ENCODE measurements at regions of chr11 and their contacts with region 1.

Region 1: DNA sequence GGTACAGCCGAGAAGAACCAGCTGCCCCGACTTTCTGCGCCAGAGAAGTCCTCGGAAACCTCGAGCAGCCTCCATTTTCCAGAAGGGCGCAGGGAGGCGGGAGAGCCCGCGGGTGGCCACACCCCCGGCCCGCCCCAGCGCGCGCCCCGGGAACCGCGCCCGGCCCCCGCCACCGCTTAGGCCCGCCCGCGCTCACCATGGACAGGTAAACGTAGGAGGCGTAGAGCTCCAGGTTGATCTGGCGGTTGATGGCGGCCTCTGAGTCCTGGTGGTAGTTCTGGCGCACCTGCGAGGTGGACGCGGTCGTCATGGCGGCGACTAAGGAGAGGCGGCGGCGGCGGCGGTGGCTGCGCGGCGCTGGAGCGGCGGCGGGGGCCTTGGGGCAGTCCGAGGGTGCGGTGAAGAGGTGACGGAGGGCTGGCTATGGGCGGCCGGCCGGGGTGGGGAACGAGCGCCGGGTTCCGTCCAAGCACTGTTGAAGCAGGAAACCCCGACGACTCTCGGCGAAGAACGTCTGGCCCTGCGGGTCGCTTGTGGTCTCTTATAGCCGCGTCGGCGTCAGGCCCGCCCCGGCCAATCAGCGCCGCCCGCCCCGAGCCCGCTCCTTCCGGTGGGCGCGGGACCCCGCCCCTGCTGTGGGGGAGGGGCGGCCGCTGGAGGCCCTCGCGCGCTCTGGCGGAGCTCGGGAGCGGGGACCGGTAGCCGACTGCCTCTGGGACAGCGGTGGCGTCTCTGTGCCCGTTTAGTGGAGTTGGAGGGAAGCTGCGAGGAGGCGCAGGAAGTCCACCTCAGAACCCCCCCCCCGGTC is at the start of gene FTH1:
- DNase-seq: peak; percentile 96 to 97
- ATAC-seq: peak; percentile 90
- H3K4me3 ChIP-seq: peak within 1 kb of the TSS; percentile 87 to 96
- H3K27ac ChIP-seq: peak within 1 kb of the TSS; percentile 63 to 96
- H3K4me1 ChIP-seq: no peaks in the 10 kb centered on the region
- H3K27me3 ChIP-seq: no peaks in the 10 kb centered on the region
- total RNA-seq, gene FTH1: 2,602 to 2,677 TPM

Region 2: DNA sequence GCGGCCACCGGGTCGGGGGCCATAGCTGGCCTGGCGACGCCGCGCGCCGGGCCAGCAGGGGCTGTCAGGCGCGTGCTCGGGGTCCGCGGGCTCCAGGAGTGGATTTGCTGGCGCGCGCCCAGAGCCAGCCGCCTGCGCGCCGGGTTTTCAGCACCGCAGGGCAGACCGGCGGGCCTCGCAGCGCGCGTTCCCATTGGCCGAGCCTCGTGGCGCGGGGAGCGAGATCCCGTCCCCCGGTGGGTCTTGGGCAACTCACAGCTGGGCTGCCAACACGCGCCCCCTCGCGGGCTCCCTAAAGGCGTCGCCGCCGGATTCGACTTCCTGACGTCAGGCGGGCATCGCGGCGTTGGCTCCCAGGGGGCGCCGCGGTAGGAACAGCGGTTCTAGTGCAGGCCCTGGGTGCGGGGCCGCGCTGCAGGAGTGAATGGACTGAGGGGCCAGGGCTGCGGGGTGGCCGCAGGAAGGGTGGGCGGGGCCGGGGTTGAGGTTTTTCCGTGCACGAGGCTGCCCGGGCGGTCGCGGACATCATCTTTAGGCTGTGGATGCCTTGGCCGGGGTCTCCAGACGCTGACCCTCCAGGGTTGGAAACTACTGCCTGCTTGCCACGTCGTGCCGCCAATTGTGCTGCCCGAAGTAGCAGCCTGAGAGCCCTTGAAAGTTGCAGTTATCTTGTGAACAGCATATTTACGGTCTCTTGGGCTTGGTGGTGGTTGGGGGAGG is 150.4 kb before region 1 on chr11 and contains the start of gene FADS1:
- intact Hi-C with region 1: loop called (anchors 5 to 10 kb)
- DNase-seq: peak; percentile 97 to 98
- ATAC-seq: peak; percentile 78
- H3K4me3 ChIP-seq: peak within 1 kb of the TSS; percentile 48 to 60
- H3K27ac ChIP-seq: peak within 1 kb of the TSS; percentile 84 to 92
- H3K4me1 ChIP-seq: no peaks in the 10 kb centered on the region
- H3K27me3 ChIP-seq: no peaks in the 10 kb centered on the region
- total RNA-seq, gene FADS1: 50.4 to 61.1 TPM

Region 3: DNA sequence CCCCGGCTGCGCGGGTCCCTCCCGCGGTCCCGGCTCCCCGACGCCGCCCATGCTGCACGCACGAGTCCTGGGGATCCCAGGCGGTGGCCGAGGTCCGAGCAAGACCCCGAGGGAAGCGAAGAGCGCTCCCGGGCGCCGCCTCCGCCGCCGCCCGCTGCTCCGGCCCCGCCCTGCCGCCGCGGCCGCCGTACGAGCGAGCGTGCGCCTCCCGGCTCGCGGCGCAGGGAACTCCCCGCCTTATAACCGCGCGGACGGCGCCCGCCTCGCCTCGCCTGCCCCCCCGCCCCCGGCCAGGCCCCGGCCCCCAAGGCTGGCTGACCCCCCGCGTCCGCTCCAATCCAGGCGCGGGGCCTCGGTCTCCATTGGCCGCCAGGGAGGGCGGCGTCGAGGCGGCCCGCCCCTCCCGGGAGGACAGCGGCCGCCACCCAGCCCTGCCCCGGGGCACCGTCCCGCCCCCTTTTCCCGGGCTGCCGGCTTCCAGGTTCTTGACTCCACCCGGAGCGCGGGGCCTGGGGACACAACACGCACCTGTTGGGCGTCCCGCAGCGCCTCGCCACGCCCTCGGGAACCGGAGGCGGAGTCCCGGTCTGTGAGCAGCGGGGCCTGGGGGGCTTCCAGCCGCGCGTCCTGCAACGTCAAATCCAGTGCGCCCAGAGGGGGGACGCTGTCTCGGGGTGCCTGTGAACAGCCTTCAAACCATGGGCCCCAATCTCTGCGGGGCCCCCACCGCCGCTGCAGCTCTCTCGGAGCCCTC is 75.8 kb before region 1 on chr11 and contains the start of gene FADS3:
- intact Hi-C with region 1: loop called in 1 of 2 experiments (anchors 5 kb)
- DNase-seq: peak; percentile 89 to 95
- ATAC-seq: peak; percentile 91
- H3K4me3 ChIP-seq: peak within 1 kb of the TSS; percentile 43 to 44
- H3K27ac ChIP-seq: peak within 1 kb of the TSS; percentile 0 to 87
- H3K4me1 ChIP-seq: no peaks in the 10 kb centered on the region
- H3K27me3 ChIP-seq: no peaks in the 10 kb centered on the region
- total RNA-seq, gene FADS3: 120 to 180 TPM

Region 4: GRCh38 chr11:62008193-62008592 is 40.9 kb after region 1 on chr11:
- intact Hi-C with region 1: loop called in 1 of 2 experiments (anchors 5 kb)
- DNase-seq: no peak
- ATAC-seq: no peak
- H3K4me3 ChIP-seq: no peak overlapping the region
- H3K27ac ChIP-seq: no peak overlapping the region
- H3K4me1 ChIP-seq: no peaks in the 10 kb centered on the region
- H3K27me3 ChIP-seq: no peaks in the 10 kb centered on the region

Measured in aorta (tissue), 5 donors.